SK-N-SH (cell line): ENCODE measurements at regions of chr14 and their contacts with region 1.

Region 1: GRCh38 chr14:25400607-25401206 is 350.8 kb upstream of the STXBP6 start:
- DNase-seq: peak; percentile 9
- H3K4me3 ChIP-seq: no peak overlapping the region; a peak in 1 of 4 replicates
- H3K27ac ChIP-seq: no peak overlapping the region
- H3K4me1 ChIP-seq: no peaks in the 10 kb centered on the region
- H3K27me3 ChIP-seq: no peaks in the 10 kb centered on the region
- CTCF ChIP-seq: peak; percentile 87
- EP300 ChIP-seq: no peak
- RAD21 ChIP-seq: peak; percentile 42; the same call in 1 of the 2 replicates

Region 2: DNA sequence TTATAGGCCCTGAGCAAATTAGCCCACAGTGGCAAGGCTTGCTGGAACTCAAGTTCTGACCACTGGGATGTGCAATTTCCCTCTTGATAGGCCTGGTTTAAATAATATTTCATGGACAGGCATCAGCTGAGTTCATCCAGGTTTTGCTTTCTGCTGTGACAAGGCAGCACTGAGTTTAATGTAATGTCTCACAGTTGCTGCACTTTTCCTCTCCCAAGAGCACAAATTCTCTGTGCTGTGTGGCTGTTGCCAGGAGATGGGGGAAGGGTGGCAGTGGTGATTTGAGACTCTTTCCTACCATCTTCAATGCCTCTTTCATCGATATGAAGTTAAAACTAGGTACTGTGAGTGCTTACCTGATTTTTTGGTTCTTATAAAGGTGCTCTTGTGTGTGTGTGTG is 77.9 kb before region 1 on chr14:
- CTCF ChIA-PET with region 1: no interaction called
- POLR2A ChIA-PET with region 1: no interaction called
- DNase-seq: no peak
- H3K4me3 ChIP-seq: no peak overlapping the region
- H3K27ac ChIP-seq: no peak overlapping the region
- H3K4me1 ChIP-seq: no peaks in the 10 kb centered on the region
- H3K27me3 ChIP-seq: no peaks in the 10 kb centered on the region
- CTCF ChIP-seq: no peak
- EP300 ChIP-seq: no peak
- RAD21 ChIP-seq: no peak

Region 3: DNA sequence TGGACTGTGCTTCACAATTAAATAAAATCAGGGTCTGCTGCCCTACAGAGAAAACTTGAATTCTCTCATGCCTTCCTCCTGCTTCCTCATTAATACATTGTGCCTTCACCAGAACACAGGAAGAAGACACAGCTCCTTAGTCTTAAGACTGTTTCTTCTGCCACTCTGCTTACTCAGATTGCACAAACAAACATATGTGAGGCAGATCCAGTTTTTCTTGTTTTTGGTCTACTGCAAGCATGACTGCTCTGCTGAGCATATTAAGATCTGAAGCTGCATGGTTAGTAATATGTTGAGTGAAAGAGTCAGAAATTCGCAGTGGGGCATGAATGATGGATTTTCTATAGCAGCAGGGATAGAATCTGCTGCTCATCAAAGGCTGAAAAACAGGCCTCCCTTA is 29.6 kb before region 1 on chr14:
- CTCF ChIA-PET with region 1: interaction called, 16 read pairs
- POLR2A ChIA-PET with region 1: no interaction called
- DNase-seq: no peak
- H3K4me3 ChIP-seq: no peak overlapping the region
- H3K27ac ChIP-seq: no peak overlapping the region
- H3K4me1 ChIP-seq: no peaks in the 10 kb centered on the region
- H3K27me3 ChIP-seq: no peaks in the 10 kb centered on the region
- CTCF ChIP-seq: no peak
- EP300 ChIP-seq: no peak
- RAD21 ChIP-seq: no peak

Region 4: DNA sequence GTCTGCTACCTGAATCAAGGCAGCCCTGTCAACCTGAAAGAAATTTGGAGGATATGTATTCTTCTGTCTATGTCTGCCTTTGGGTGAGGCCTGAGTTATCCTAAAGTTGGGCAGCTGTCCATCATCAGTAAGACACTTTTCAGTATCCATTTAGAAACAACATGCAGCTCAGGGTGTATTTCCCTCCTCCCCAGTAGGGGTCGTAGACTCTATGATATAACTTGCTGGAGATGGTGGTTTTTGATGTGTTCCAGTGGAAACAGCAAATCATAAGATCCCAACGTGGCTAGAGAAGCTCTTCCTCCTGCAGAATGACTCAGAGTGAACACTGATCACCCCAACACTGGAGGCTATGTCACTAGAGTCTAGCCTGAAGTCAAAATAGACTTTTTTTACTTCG is 19.2 kb before region 1 on chr14:
- CTCF ChIA-PET with region 1: interaction called, 21 read pairs
- POLR2A ChIA-PET with region 1: no interaction called
- DNase-seq: peak; percentile 4
- H3K4me3 ChIP-seq: no peak overlapping the region
- H3K27ac ChIP-seq: no peak overlapping the region
- H3K4me1 ChIP-seq: no peaks in the 10 kb centered on the region
- H3K27me3 ChIP-seq: no peaks in the 10 kb centered on the region
- CTCF ChIP-seq: peak; percentile 57
- EP300 ChIP-seq: no peak
- RAD21 ChIP-seq: no peak

Region 5: DNA sequence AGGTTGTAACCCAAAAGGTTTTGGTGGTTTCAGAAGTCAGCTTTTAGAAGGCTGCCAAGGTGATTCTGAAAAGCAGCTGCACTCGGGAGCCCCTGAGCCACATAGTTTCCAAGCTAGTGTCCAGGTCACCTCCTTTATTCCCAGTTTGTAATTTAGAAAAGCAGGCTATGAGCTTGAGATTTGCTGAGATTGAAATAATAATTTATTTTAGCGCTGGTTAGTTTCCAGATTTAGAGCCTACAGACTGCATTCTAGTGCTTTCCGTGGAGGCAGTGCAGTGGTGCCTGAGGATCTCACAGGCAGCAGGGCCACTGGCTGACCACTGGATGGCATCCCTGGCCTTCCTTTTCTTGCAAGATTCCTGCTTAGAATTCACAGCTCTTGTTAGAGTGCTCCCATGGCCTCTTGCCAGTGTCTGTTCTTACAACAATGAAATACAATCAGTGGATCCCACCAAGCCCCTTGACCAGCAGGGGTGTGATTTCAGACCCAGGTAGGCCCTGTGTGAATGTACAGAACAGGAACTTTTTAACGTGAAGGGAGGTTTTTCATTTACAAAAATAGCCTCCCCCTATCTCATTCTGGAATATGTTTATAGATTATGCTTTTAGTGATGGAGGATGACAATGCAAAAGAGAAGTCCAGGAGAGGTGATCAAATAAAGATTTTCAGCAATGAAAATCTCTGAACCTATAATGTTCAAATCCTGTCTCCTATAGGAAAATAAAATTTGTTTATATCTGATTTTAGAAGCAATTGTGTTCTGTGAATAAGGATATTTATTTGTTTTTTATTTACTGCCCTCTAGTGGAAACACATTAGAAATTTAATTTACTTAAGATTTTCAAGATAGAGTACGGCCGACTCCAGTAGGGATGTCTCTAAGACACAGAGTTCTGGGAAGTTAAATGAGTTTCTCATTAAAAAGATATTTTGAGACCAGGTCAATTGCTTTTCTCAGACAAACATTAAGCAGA is 11.4 kb after region 1 on chr14:
- CTCF ChIA-PET with region 1: interaction called, 37 read pairs
- POLR2A ChIA-PET with region 1: no interaction called
- DNase-seq: no peak
- H3K4me3 ChIP-seq: no peak overlapping the region; a peak in 1 of 4 replicates
- H3K27ac ChIP-seq: no peak overlapping the region
- H3K4me1 ChIP-seq: no peaks in the 10 kb centered on the region
- H3K27me3 ChIP-seq: peaks cover 6% of the 10 kb centered on the region
- CTCF ChIP-seq: peak; percentile 54
- EP300 ChIP-seq: no peak
- RAD21 ChIP-seq: no peak